Activated T-helper 1 cell treated with anti-CD3 and anti-CD28 coated beads, Interleukin-12 subunit alpha, Interleukin-12 subunit beta, Interleukin-2, Interleukin-4 antibody, amounts not matched to agents 30 ng/mL and 10 ng/mL and 1 ng/mL, durations not matched to agents 14 hours and 24 hours and 36 hours (primary cell): ENCODE measurements at regions of chr19 and their contacts with region 1.

Region 1: DNA sequence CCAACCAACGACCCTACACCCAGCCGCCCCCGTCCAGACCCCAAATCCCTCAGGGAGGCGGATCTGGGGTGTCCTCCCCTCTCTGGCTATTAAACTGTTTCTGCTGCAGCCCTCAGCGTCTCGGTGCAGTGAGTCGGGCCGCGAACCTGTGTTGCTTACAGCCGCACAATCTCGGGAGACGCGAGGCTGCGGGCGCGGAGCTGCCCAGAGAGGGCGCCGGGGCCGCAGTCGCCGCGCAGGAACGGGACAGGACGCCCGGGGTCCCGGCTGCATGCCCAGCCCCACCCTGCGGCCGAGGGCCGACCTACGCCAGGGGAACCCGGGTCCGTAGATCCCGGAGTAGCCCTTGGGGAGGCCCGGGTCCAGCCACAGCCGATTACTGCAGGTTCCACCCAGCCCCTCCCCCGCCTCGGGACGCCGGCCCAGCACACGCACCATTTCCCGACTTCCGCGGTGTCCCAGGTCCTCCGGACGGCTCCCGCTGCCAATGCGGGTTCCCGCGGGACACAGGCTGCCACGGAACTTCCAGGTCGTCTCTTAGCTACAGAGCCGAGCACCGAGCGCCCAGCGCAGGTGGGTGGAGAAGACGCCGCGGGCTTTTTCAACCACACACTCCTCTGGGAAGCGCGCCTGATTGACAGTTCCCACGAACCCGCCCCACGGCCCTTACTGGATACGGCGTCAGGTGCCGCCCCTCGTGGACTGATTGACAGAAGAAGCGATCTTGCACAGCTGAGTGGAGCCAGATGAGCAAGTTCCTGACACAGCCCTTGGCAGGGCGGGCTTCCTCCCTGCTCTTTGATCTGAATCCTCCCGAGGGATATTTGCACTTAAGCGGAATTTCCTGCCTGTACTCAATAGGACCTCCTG is at the start of gene ZNF799:
- DNase-seq: peak; percentile 81
- H3K4me3 Mint-ChIP-seq: peak within 1 kb of the TSS; percentile 93
- H3K27ac Mint-ChIP-seq: peak within 1 kb of the TSS; percentile 68
- H3K4me1 Mint-ChIP-seq: peaks cover 24% of the 10 kb centered on the region
- H3K27me3 Mint-ChIP-seq: no peaks in the 10 kb centered on the region
- total RNA-seq, gene ZNF799: 3.1 TPM in 2 replicates

Region 2: GRCh38 chr19:12156223-12157058 is 244.4 kb before region 1 on chr19 and contains the start of gene ZNF625:
- intact Hi-C with region 1: no loop called
- DNase-seq: peak; percentile 37
- H3K4me3 Mint-ChIP-seq: peak within 1 kb of the TSS; percentile 90
- H3K27ac Mint-ChIP-seq: peak within 1 kb of the TSS; percentile 65
- H3K4me1 Mint-ChIP-seq: peaks cover 10% of the 10 kb centered on the region
- H3K27me3 Mint-ChIP-seq: peaks cover 4% of the 10 kb centered on the region
- total RNA-seq, gene ZNF625: 2.5 and 2.9 TPM in 2 replicates

Region 3: GRCh38 chr19:12333162-12334159 is 67.4 kb before region 1 on chr19 and contains the start of gene ZNF563:
- intact Hi-C with region 1: loop called (anchors 1 kb)
- DNase-seq: peak; percentile 96
- H3K4me3 Mint-ChIP-seq: peak within 1 kb of the TSS; percentile 96
- H3K27ac Mint-ChIP-seq: peak within 1 kb of the TSS; percentile 96
- H3K4me1 Mint-ChIP-seq: peaks cover 38% of the 10 kb centered on the region
- H3K27me3 Mint-ChIP-seq: no peaks in the 10 kb centered on the region
- total RNA-seq, gene ZNF563: 1.4 and 2.5 TPM in 2 replicates